CD14-positive monocyte (primary cell): ENCODE measurements at regions of chr18 and their contacts with region 1.

Region 1: DNA sequence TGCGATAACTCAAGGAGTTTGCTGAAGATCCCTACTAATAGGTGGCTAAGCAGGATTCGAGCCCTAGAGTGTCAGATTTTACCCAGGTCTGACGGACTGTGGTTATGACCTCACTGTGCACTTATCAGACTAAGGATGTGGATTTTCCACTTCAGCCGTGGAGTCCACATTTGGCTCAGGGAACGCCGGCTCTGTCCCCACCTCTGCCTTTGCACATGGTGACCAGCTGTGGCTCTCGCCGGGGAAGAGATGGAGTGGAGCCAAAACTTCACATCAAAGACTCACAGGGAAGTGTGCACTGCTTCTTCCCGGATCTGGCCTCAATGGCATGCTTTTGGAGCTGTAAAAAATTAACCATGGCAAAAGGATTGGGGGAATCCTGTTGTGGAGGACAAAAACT is 249.3 kb upstream of the APCDD1 start:
- DNase-seq: no peak
- H3K4me3 ChIP-seq: no peak overlapping the region
- H3K4me3 Mint-ChIP-seq: no peak overlapping the region
- H3K27ac ChIP-seq: no peak overlapping the region
- H3K27ac Mint-ChIP-seq: peak overlapping the region in 3 of 7 donors; percentile 66 to 74 (median 68)
- H3K4me1 ChIP-seq: peaks cover 35 to 40% of the 10 kb centered on the region in 2 donors
- H3K4me1 Mint-ChIP-seq: peaks cover 50% of the 10 kb centered on the region
- H3K27me3 ChIP-seq: no peaks in the 10 kb centered on the region
- H3K27me3 Mint-ChIP-seq: peaks cover 0 to 4% (median 1%) of the 10 kb centered on the region in 3 donors
- CTCF ChIP-seq: no peak

Region 2: DNA sequence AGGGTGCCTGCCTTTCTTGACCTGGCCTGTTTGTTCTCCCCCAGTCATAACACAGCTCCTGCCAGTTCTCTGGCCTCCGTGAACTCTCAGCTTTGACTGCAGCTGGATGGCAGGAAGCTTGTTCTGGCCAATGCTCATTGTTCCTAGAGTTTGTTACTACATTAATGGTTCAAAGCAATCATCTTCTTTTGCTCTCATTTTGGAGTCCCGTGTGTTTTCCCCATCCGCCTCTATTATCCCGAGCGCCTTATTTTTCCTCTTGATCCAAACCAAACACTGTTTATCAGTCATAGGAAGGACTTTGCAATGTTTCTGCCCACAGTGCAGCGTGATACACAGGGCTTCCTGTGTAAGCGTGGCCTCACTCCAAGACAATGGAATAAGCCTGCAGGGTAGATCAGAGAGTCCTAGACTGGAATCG is 65.0 kb after region 1 on chr18:
- intact Hi-C with region 1: loop called in 1 of 2 experiments (anchors 10 kb)
- DNase-seq: no peak
- H3K4me3 ChIP-seq: no peak overlapping the region
- H3K4me3 Mint-ChIP-seq: no peak overlapping the region
- H3K27ac ChIP-seq: no peak overlapping the region
- H3K27ac Mint-ChIP-seq: peak overlapping the region in 2 of 7 donors; percentile 4 to 44
- H3K4me1 ChIP-seq: peaks cover 24 to 29% of the 10 kb centered on the region in 2 donors
- H3K4me1 Mint-ChIP-seq: peaks cover 30% of the 10 kb centered on the region
- H3K27me3 ChIP-seq: no peaks in the 10 kb centered on the region
- H3K27me3 Mint-ChIP-seq: no peaks in the 10 kb centered on the region
- CTCF ChIP-seq: no peak

Region 3: DNA sequence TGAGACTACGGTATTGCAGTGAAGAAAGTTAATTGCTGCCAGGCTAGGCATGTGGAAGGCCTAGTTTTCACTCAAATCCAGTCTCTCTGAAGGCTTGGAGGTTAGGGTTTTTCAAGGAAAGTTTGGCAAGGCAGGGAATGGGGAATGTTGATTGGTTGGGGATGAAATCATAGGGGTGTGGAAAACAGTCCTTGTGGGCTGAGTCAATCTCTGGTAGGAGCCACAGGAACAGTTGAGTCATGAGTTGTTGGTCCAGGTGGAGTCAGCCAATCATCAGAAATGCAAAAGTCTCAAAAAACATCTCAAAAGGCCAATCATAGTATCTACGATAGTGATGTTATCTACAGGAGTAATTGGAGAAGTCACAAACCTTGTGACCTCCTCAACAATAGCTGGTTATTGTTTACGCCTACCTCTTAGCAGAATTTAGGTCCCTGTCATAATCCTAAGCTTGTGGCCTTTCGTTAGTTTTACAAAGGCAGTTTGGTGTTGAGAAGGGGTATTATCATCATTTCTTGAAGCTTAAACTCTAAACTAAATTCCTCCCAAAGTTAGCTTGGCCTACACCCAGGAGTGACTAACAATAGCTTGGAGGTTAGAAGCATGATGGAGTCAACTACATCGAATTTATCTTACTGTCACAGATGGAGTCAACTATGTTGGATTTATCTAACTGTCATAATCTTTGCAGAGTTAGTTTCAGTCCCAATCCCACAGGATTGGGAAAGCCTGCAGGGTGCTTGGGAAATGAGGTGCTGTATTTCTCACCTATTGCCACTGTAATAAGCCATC is 215.6 kb after region 1 on chr18:
- intact Hi-C with region 1: no loop called
- DNase-seq: no peak
- H3K4me3 ChIP-seq: no peak overlapping the region
- H3K4me3 Mint-ChIP-seq: no peak overlapping the region
- H3K27ac ChIP-seq: no peak overlapping the region
- H3K27ac Mint-ChIP-seq: no peak overlapping the region
- H3K4me1 ChIP-seq: no peaks in the 10 kb centered on the region
- H3K4me1 Mint-ChIP-seq: peaks cover 3% of the 10 kb centered on the region
- H3K27me3 ChIP-seq: peaks cover 3 to 17% of the 10 kb centered on the region in 2 donors
- H3K27me3 Mint-ChIP-seq: peaks cover 12 to 17% (median 13%) of the 10 kb centered on the region in 3 donors
- CTCF ChIP-seq: no peak